Heart left ventricle (tissue), 16 donors: ENCODE measurements at regions of chr17 and their contacts with region 1.

Region 1: GRCh38 chr17:82105882-82106687 is 8.0 kb upstream of the FASN start:
- DNase-seq: peak in 2 of 5 donors; percentile 67 to 77
- ATAC-seq: peak; percentile 12 to 51 (median 49)
- H3K4me3 ChIP-seq: peak overlapping the region in 8 of 12 donors; percentile 14 to 54 (median 24)
- H3K27ac ChIP-seq: peak overlapping the region; percentile 6 to 92 (median 52)
- H3K4me1 ChIP-seq: peaks cover 0 to 37% (median 20%) of the 10 kb centered on the region in 12 donors
- H3K27me3 ChIP-seq: no peaks in the 10 kb centered on the region
- CTCF ChIP-seq: peak in 2 of 12 donors; percentile 10 to 27
- POLR2A ChIP-seq: no peak

Region 2: GRCh38 chr17:82037113-82037888 is 68.8 kb before region 1 on chr17 and contains the start of gene DCXR:
- intact Hi-C with region 1: loop called in 1 of 10 experiments (anchors 10 kb)
- DNase-seq: peak; percentile 97 to 99 (median 98)
- ATAC-seq: peak; percentile 97 to 98 (median 97)
- H3K4me3 ChIP-seq: peak within 1 kb of the TSS; percentile 49 to 92 (median 73)
- H3K27ac ChIP-seq: peak within 1 kb of the TSS; percentile 91 to 98 (median 94)
- H3K4me1 ChIP-seq: peaks cover 4 to 31% (median 15%) of the 10 kb centered on the region in 12 donors
- H3K27me3 ChIP-seq: peaks cover 0 to 4% (median 0%) of the 10 kb centered on the region in 9 donors
- CTCF ChIP-seq: peak; percentile 72 to 93 (median 82)
- POLR2A ChIP-seq: peak; percentile 75 to 96
- total RNA-seq, gene DCXR: 139 to 312 (median 185) TPM